AG04449 (cell line): ENCODE measurements at regions of chr11 and their contacts with region 1.

Region 1: GRCh38 chr11:13384908-13385640 is 77.9 kb downstream of the BTBD10 start:
- DNase-seq: peak; percentile 16
- H3K4me3 ChIP-seq: no peak overlapping the region
- CTCF ChIP-seq: peak; percentile 58

Region 2: DNA sequence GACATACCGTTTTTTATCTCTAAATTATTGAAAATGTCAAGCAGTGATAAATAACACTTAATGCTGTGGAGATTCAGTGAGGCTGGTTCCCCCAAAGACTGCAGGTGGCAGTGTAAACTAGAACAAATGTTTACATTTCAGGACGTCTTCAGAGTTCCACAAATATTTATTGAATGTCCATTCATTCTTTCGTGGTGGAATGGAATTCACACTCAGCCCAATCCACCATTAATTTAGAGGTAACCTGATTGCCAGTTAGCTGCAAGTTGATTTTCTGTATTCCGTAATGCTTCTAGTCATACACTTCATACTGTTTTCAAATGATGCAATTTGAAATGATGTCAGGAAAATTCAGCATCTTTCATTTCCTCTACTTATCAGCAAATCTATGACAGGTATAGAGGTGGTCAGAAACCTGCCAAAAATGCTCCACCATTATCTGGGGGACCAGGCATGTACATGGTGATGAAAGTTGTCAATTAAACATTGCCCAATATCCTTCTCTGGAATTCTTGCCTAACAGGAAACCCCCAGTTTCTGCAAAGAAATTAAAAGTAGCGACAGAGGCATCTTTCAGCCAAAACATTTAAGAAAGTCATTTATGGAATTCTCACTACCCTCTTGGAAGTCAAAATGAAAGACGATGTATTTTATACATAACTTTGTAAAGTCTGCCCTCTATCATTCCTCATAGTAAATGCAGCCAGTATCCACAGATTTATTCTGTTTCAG is 201.8 kb before region 1 on chr11:
- CTCF ChIA-PET with region 1: interaction called, 14 read pairs
- POLR2A ChIA-PET with region 1: no interaction called
- DNase-seq: peak; percentile 36
- H3K4me3 ChIP-seq: peak overlapping the region; percentile 28
- CTCF ChIP-seq: peak; percentile 24

Region 3: GRCh38 chr11:13249996-13250395 is 135.1 kb before region 1 on chr11:
- CTCF ChIA-PET with region 1: interaction called, 14 read pairs
- POLR2A ChIA-PET with region 1: no interaction called
- DNase-seq: no peak
- H3K4me3 ChIP-seq: no peak overlapping the region
- CTCF ChIP-seq: peak; percentile 27

Region 4: DNA sequence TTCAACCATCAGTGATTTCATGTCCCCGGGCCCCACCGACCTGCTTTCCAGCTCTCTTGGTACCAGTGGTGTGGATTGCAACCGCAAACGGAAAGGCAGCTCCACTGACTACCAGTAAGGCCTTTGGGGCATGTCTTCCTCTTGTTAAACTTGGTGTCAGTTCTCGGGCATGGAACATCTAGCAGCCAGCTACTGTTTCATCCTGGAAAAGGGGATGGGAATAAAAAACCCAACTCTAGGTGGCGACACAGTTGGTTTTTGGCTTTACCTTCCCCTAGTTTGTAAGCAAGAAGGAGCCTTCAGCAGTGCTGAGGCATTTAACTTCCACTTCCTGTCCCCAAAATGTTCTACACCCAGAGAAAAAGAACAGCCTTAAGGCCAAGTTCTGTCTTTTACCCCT is 30.7 kb before region 1 on chr11:
- CTCF ChIA-PET with region 1: interaction called, 37 read pairs
- POLR2A ChIA-PET with region 1: no interaction called
- DNase-seq: no peak
- H3K4me3 ChIP-seq: no peak overlapping the region
- CTCF ChIP-seq: peak; percentile 19

Region 5: GRCh38 chr11:13368041-13368446 is 17.0 kb before region 1 on chr11:
- CTCF ChIA-PET with region 1: interaction called, 112 read pairs
- POLR2A ChIA-PET with region 1: no interaction called
- DNase-seq: peak; percentile 29
- H3K4me3 ChIP-seq: no peak overlapping the region
- CTCF ChIP-seq: no peak

Region 6: DNA sequence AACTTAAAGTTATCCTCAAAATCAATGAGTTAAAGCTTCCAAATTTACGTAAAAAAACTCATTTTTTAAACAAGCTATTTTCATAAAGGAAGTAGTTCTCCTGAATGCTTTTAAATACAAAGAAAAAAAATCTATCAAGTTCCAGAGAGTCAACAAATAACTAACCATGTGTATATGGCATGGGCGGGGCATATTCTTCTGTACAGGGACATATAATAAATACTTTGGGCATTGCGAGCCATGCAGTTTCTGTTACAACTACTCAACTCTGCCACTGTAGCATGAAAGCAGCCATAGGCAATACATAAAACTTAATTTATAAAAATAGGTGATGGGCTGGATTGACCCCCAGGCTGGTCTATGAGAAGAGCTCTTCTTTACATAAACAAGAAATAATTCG is 20.1 kb after region 1 on chr11:
- CTCF ChIA-PET with region 1: interaction called, 21 read pairs
- POLR2A ChIA-PET with region 1: no interaction called
- DNase-seq: no peak
- H3K4me3 ChIP-seq: no peak overlapping the region
- CTCF ChIP-seq: no peak

Region 7: GRCh38 chr11:13462901-13463778 is 78.1 kb after region 1 on chr11 and contains the start of gene BTBD10:
- CTCF ChIA-PET with region 1: interaction called, 24 read pairs
- POLR2A ChIA-PET with region 1: no interaction called
- DNase-seq: peak; percentile 49
- H3K4me3 ChIP-seq: peak within 1 kb of the TSS; percentile 87
- CTCF ChIP-seq: no peak